ENCODE measurements at regions of chr14 and their contacts with region 1.

Region 1: GRCh38 chr14:75069045-75069810 is at the start of gene ZC2HC1C:
- DNase-seq: peak; percentile 96 to 99 (median 98)
- ATAC-seq: peak; percentile 91 to 97 (median 94)
- H3K4me3 ChIP-seq: peak within 1 kb of the TSS; percentile 27 to 69 (median 60)
- H3K27ac ChIP-seq: peak within 1 kb of the TSS; percentile 69 to 98 (median 94)
- H3K4me1 ChIP-seq: peaks cover 0 to 66% (median 30%) of the 10 kb centered on the region in 12 donors
- H3K27me3 ChIP-seq: no peaks in the 10 kb centered on the region
- CTCF ChIP-seq: no peak
- POLR2A ChIP-seq: peak in 1 of 2 donors; percentile 62
- total RNA-seq, gene ZC2HC1C: 3.4 to 9.5 (median 8.4) TPM

Region 2: DNA sequence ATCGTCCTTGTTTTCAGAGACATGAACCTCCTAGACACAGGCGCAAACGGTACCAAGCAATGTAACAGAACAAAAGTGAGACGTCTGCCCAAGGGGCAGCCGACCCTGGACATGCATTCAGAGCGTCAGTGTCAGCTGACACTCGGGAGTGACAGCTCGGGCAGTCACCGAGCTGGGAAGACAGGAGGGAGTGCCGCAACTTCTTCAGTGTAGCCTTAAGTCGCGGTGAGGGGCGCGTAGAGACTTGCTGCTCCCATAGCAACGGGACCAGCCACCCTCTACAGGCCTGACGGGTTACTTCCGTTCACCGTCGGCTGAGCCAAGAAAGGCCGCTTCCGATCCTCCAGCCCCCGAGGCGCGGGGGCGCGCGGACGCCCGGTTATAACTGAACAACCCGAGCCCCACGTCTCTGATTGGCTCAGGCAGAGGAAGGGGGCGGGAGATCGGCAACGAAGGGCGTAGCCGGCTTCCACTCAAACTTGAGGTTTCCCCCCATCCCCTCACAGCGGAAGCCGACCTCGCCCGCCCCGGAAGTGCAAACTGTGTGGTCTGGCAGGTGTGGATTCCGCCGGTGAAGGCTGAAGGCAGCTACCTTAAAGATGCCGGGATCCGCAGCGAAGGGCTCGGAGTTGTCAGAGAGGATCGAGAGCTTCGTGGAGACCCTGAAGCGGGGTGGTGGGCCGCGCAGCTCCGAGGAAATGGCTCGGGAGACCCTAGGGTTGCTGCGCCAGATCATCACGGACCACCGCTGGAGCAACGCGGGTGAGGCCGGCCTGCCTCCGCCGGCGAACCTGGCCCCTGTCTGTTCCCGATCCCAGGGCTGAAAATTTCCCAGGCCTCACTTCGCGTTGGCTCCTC is 66.6 kb before region 1 on chr14 and contains the start of gene EIF2B2:
- intact Hi-C with region 1: loop called in 2 of 10 experiments (anchors 1 to 5 kb)
- DNase-seq: peak; percentile 98 to 99 (median 98)
- ATAC-seq: peak; percentile 100
- H3K4me3 ChIP-seq: peak within 1 kb of the TSS; percentile 61 to 99 (median 86)
- H3K27ac ChIP-seq: peak within 1 kb of the TSS; percentile 81 to 94 (median 89)
- H3K4me1 ChIP-seq: peaks cover 6 to 27% (median 14%) of the 10 kb centered on the region in 12 donors
- H3K27me3 ChIP-seq: no peaks in the 10 kb centered on the region
- CTCF ChIP-seq: peak in 5 of 12 donors; percentile 13 to 41 (median 14)
- POLR2A ChIP-seq: peak in 1 of 2 donors; percentile 71
- total RNA-seq, gene EIF2B2: 26.2 to 40.9 (median 30.3) TPM

Region 3: GRCh38 chr14:75011356-75011994 is 57.8 kb before region 1 on chr14:
- intact Hi-C with region 1: loop called in 4 of 10 experiments (anchors 5 kb)
- DNase-seq: no peak
- ATAC-seq: peak in 3 of 4 donors; percentile 65 to 72 (median 67)
- H3K4me3 ChIP-seq: no peak overlapping the region
- H3K27ac ChIP-seq: peak overlapping the region in 11 of 12 donors; percentile 20 to 78 (median 66)
- H3K4me1 ChIP-seq: peaks cover 7 to 37% (median 27%) of the 10 kb centered on the region in 12 donors
- H3K27me3 ChIP-seq: no peaks in the 10 kb centered on the region
- CTCF ChIP-seq: no peak
- POLR2A ChIP-seq: no peak

Region 4: GRCh38 chr14:75050852-75051554 is 18.2 kb before region 1 on chr14 and contains the start of gene MLH3:
- intact Hi-C with region 1: loop called in 1 of 10 experiments (anchors 2 kb)
- DNase-seq: peak; percentile 84 to 93 (median 89)
- ATAC-seq: peak; percentile 71 to 95 (median 92)
- H3K4me3 ChIP-seq: peak within 1 kb of the TSS; percentile 48 to 80 (median 62)
- H3K27ac ChIP-seq: peak within 1 kb of the TSS; percentile 67 to 93 (median 90)
- H3K4me1 ChIP-seq: peaks cover 0 to 39% (median 15%) of the 10 kb centered on the region in 12 donors
- H3K27me3 ChIP-seq: no peaks in the 10 kb centered on the region
- CTCF ChIP-seq: peak in 2 of 12 donors; percentile 12
- POLR2A ChIP-seq: peak in 1 of 2 donors; percentile 67
- total RNA-seq, gene MLH3: 11.6 to 23.9 (median 15.3) TPM

Region 5: GRCh38 chr14:75176142-75176820 is 107.1 kb after region 1 on chr14 and contains the start of gene TMED10:
- intact Hi-C with region 1: no loop called
- DNase-seq: peak; percentile 87 to 95 (median 90)
- ATAC-seq: peak; percentile 95 to 97 (median 96)
- H3K4me3 ChIP-seq: peak within 1 kb of the TSS; percentile 70 to 99 (median 89)
- H3K27ac ChIP-seq: peak within 1 kb of the TSS; percentile 87 to 98 (median 96)
- H3K4me1 ChIP-seq: peaks cover 3 to 48% (median 25%) of the 10 kb centered on the region in 12 donors
- H3K27me3 ChIP-seq: no peaks in the 10 kb centered on the region
- CTCF ChIP-seq: peak in 2 of 12 donors; percentile 1 to 23
- POLR2A ChIP-seq: peak in 1 of 2 donors; percentile 36
- total RNA-seq, gene TMED10: 235 to 362 (median 275) TPM

Measured in heart left ventricle (tissue), 16 donors.